Activated CD4-positive, alpha-beta memory T cell treated with anti-CD3 and anti-CD28 coated beads for 36 hours (primary cell): ENCODE measurements at regions of chr2 and their contacts with region 1.

Region 1: GRCh38 chr2:237939227-237939626 is 27.6 kb upstream of the UBE2F start:
- DNase-seq: no peak
- H3K4me3 Mint-ChIP-seq: no peak overlapping the region
- H3K27ac Mint-ChIP-seq: no peak overlapping the region
- H3K4me1 Mint-ChIP-seq: peaks cover 40% of the 10 kb centered on the region
- H3K27me3 Mint-ChIP-seq: no peaks in the 10 kb centered on the region

Region 2: DNA sequence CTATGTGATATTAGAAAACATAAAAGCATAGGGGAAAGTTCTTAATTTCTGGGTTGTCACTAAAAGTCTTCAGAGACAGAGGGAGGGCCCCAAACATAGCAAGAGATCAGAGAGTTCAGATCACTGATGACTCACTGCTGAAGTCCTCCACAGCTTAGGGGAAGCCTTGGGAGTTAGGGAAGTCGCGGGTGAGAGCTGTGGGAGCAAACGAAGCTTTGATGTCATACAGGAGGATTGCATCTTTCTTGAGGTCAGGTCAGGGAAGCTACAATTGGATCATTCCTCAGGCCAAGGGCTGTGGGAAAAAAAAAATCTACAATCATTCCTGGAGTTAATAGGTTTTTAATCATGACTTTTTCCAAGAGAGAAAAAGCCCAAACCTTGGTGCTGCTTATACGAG is 757.4 kb before region 1 on chr2:
- CTCF ChIA-PET with region 1: no interaction called
- POLR2A ChIA-PET with region 1: no interaction called
- intact Hi-C with region 1: no loop called
- DNase-seq: no peak
- H3K4me3 Mint-ChIP-seq: no peak overlapping the region
- H3K27ac Mint-ChIP-seq: no peak overlapping the region
- H3K4me1 Mint-ChIP-seq: no peaks in the 10 kb centered on the region
- H3K27me3 Mint-ChIP-seq: peaks cover 26% of the 10 kb centered on the region

Region 3: DNA sequence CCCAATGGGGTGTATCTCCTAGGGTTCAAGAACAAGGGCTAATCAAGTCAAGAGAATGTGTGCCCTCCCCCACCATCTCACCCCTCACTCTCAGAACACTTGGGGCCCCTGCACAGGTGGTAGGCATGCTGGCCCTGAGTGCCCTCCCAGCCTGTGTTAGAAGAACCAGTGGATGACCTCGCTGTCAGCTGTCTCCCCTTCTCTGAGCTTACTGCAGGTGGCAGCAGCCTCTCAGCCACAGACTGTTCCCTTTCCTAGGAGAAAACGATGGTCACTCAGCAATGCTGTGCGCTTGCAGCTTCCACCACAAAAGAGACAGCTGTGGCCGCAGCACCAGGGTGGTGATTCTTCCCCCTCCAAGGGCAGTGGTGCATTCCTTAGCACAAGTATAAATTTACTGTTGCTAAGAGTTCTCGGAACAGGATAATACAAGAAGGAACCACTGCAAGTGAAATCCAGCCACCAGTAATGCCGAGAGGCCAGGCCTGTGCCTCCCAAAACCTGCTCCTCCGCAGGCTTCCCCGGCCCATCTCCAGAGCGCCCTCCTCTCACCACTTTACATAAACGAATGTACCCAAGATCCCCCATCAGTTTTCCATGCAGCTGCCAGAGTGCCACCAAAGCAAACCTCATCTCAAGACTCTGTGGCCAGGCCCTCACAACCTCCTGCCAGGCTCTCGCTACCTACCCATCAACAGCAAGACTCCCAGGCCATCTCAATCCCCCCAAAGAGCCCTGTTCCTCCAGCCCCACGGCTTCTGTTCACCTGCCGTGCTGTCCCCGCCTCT is 80.7 kb before region 1 on chr2:
- CTCF ChIA-PET with region 1: no interaction called
- POLR2A ChIA-PET with region 1: no interaction called
- intact Hi-C with region 1: no loop called
- DNase-seq: peak; percentile 68
- H3K4me3 Mint-ChIP-seq: peak overlapping the region; percentile 5
- H3K27ac Mint-ChIP-seq: no peak overlapping the region
- H3K4me1 Mint-ChIP-seq: peaks cover 15% of the 10 kb centered on the region
- H3K27me3 Mint-ChIP-seq: peaks cover 36% of the 10 kb centered on the region

Region 4: DNA sequence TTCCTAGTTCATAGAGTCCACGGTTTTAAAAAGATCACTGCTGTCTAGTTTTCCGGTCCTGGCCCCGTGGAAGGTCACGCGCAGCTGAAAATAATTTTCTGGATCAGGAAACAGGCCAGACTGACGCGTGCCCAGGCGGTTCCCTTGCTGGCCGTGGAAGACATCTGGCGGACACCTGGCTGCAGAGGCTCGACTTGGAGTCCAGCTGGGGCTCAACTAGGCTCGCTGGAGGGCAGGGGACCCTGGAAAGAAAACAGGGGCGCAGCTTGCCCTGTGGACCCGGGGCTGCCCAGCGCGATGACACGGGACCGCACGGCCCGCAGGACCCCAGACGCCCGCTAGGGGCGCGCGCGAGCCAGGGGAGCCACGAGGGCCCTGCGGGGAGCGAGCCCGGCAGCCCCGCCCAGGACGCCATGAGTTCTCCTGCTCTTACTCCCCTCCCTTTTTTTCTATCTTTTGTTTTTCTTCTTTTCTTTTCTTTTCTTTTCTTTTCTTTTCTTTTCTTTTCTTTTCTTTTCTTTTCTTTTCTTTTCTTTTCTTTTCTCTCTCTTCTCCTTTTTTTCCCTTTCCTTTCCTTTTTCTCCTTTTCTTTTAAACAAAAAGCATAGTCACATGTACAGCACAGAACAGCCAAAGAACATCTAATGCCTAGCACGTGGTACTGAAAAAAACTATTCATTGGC is 15.6 kb before region 1 on chr2:
- CTCF ChIA-PET with region 1: interaction called, 12 read pairs
- POLR2A ChIA-PET with region 1: no interaction called
- intact Hi-C with region 1: no loop called
- DNase-seq: peak; percentile 85
- H3K4me3 Mint-ChIP-seq: peak overlapping the region; percentile 48
- H3K27ac Mint-ChIP-seq: no peak overlapping the region
- H3K4me1 Mint-ChIP-seq: peaks cover 33% of the 10 kb centered on the region
- H3K27me3 Mint-ChIP-seq: no peaks in the 10 kb centered on the region